HEK293 (cell line): ENCODE measurements at regions of chr1 and their contacts with region 1.

Region 1: GRCh38 chr1:119724611-119725218 is 13.0 kb downstream of the PHGDH start:
- H3K4me3 ChIP-seq: no peak overlapping the region
- H3K27ac ChIP-seq: no peak overlapping the region
- H3K4me1 ChIP-seq: no peaks in the 10 kb centered on the region
- CTCF ChIP-seq: no peak

Region 2: DNA sequence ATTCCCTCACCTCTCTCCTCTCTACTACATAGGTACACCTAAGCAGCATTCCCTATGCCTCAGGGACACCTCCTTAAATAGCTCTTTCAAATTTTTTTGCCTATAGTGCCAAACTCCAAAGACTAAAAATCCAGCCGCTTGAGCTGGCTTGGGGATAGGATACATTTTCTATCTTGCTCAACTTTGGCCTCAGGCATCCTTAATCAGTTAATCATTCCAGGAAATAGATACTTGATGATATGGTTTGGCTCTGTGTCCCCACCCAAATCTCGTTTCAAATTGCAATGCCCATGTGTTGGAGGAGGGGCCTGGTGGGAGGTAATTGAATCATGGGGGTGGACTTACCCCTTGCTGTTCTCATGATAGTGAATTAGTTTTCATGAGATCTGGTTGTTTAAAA is 24.4 kb before region 1 on chr1:
- CTCF ChIA-PET with region 1: no interaction called
- POLR2A ChIA-PET with region 1: no interaction called
- H3K4me3 ChIP-seq: no peak overlapping the region
- H3K27ac ChIP-seq: no peak overlapping the region
- H3K4me1 ChIP-seq: no peaks in the 10 kb centered on the region
- CTCF ChIP-seq: no peak

Region 3: DNA sequence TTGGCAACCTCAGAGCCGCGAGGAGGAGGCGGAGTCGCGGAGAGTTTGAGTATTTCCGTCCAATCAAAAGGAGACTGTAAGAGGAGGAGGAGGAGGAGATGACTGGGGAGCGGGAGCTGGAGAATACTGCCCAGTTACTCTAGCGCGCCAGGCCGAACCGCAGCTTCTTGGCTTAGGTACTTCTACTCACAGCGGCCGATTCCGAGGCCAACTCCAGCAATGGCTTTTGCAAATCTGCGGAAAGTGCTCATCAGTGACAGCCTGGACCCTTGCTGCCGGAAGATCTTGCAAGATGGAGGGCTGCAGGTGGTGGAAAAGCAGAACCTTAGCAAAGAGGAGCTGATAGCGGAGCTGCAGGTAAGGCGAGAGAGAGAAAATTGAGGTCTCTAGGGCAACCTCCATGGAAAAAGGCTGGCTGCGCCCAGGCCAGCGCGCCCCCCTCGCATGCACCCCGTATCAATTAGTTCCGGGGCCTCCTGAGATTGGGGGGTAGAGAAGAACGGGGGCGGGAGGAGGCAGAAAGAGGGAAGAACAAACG is 12.8 kb before region 1 on chr1 and contains the start of gene PHGDH:
- CTCF ChIA-PET with region 1: no interaction called
- POLR2A ChIA-PET with region 1: interaction called, 11 read pairs
- H3K4me3 ChIP-seq: peak within 1 kb of the TSS; percentile 76
- H3K27ac ChIP-seq: peak within 1 kb of the TSS; percentile 90
- H3K4me1 ChIP-seq: peaks cover 15% of the 10 kb centered on the region
- CTCF ChIP-seq: no peak

Region 4: GRCh38 chr1:119859647-119860046 is 134.9 kb after region 1 on chr1:
- CTCF ChIA-PET with region 1: no interaction called
- POLR2A ChIA-PET with region 1: no interaction called
- H3K4me3 ChIP-seq: no peak overlapping the region
- H3K27ac ChIP-seq: no peak overlapping the region
- H3K4me1 ChIP-seq: no peaks in the 10 kb centered on the region
- CTCF ChIP-seq: no peak

Region 5: GRCh38 chr1:119870917-119871596 is 146.3 kb after region 1 on chr1:
- CTCF ChIA-PET with region 1: no interaction called
- POLR2A ChIA-PET with region 1: no interaction called
- H3K4me3 ChIP-seq: no peak overlapping the region
- H3K27ac ChIP-seq: no peak overlapping the region
- H3K4me1 ChIP-seq: no peaks in the 10 kb centered on the region
- CTCF ChIP-seq: peak; percentile 78